ENCODE measurements at regions of chr4 and their contacts with region 1.

Region 1: DNA sequence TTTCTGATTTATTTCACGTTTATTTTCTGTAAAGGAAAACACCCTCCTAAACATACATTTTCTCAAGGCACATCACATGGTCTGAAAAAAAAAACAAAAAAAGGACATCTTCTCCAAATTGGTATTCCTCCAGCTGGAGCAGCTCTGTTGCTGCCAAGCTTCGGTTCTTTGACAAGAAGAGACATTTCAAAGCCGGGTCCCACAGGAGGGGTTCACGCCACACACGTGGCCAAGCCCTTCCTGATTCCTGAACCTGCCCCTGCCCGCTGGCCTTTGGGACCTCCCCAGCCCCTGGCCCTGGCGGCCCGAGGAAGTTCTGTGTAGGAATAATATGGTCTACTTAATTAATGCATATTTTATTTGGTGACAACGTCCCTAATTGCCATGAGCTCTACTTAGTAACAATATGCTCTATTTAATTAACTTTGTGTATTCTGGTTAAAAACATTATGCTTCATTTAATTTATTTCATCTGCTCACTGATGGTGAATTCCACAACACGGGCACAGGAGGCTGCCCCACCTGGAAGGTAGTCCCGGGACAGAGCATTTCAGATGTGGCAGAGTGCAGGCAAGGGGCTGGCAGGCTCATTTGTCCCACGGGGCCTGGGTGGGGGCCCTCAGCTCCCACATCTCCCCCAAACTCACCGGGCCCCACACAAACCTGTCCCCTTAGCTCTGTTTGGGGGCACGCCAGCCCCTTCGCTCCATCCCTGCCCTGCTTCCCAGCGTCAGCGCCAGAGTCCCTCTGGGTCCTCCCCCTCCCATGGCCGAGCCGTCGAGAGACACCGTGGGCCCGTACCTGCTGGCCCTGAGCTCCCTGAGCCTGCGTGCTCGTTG is 5.3 kb upstream of the RGS12 start:
- DNase-seq: peak; percentile 15 to 37
- H3K4me3 ChIP-seq: no peak overlapping the region
- H3K27ac ChIP-seq: peak overlapping the region in 1 of 2 donors; percentile 5
- H3K4me1 ChIP-seq: peaks cover 12 to 14% of the 10 kb centered on the region in 2 donors
- H3K27me3 ChIP-seq: peaks cover 0 to 2% of the 10 kb centered on the region in 2 donors
- CTCF ChIP-seq: no peak
- POLR2A ChIP-seq: no peak

Region 2: GRCh38 chr4:3228281-3228690 is 59.2 kb before region 1 on chr4:
- intact Hi-C with region 1: loop called (anchors 2 kb)
- DNase-seq: no peak
- H3K4me3 ChIP-seq: no peak overlapping the region
- H3K27ac ChIP-seq: no peak overlapping the region
- H3K4me1 ChIP-seq: no peaks in the 10 kb centered on the region
- H3K27me3 ChIP-seq: no peaks in the 10 kb centered on the region
- CTCF ChIP-seq: no peak
- POLR2A ChIP-seq: no peak

Region 3: GRCh38 chr4:3269991-3270611 is 17.4 kb before region 1 on chr4:
- intact Hi-C with region 1: no loop called
- DNase-seq: no peak
- H3K4me3 ChIP-seq: no peak overlapping the region
- H3K27ac ChIP-seq: no peak overlapping the region
- H3K4me1 ChIP-seq: no peaks in the 10 kb centered on the region
- H3K27me3 ChIP-seq: no peaks in the 10 kb centered on the region
- CTCF ChIP-seq: no peak
- POLR2A ChIP-seq: no peak

Measured in breast epithelium (tissue), 4 donors.